OCI-LY7 (cell line): ENCODE measurements at regions of chr9 and their contacts with region 1.

Region 1: DNA sequence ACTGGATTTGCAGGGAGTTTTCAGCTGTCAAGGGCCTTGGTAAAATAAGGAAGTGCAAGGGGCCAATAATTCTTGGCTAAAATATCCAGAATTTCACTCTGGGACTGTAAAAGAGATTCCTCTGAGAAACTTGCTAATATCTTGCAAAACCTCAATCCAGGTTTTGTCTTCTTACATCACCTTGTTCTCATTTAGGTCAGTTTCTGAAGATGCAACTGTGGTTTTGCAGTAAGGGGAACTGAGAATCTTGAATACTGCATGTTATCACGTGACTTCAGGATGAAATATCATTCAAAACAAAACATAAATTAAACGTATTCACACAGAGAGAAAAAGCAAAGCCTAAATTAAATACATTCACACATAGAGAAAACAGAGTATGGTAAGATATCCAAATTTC is 35.0 kb upstream of the RIC1 start:
- DNase-seq: peak; percentile 89
- H3K4me3 ChIP-seq: peak overlapping the region; percentile 22
- H3K27ac ChIP-seq: peak overlapping the region; percentile 70
- H3K4me1 ChIP-seq: peaks cover 70% of the 10 kb centered on the region
- CTCF ChIP-seq: no peak

Region 2: DNA sequence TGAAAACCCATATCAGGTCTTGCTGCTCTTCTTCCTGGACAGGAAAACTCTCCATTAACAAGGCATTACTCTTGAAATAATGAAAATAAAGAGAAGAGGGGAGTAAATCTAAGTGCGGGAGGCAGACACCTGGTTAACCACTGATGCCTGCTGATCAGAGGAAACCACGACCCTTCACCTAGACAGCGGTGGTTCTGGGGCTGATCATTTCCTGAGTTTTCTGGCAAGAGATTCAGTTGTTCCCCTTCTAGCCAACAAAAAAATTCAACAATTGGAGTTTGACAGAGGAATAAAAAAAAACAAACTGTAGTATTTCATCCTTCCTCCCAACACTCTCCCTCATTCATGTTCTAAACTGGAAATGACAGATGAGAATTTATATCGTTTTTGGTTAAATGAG is 292.4 kb before region 1 on chr9:
- CTCF ChIA-PET with region 1: no interaction called
- POLR2A ChIA-PET with region 1: no interaction called
- intact Hi-C with region 1: loop called (anchors 10 kb)
- DNase-seq: no peak
- H3K4me3 ChIP-seq: no peak overlapping the region
- H3K27ac ChIP-seq: no peak overlapping the region
- H3K4me1 ChIP-seq: peaks cover 13% of the 10 kb centered on the region
- CTCF ChIP-seq: no peak

Region 3: DNA sequence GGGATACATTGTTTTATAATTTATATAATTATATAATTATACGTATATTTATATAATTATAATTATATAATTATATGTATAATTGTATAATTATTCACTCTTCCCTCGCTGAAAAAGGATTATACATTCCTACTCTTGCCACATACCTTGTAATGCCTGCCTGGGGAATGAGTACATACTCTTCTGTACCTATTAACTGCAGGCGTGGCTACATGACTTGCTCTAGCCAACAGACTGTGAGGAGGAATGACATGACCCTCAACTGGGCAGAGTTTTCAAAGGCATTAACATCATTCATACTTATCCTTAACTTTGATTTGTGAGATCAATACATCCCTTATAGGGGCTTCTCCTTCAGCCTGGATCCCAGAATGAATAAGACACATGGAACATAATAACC is 219.9 kb after region 1 on chr9:
- CTCF ChIA-PET with region 1: no interaction called
- POLR2A ChIA-PET with region 1: no interaction called
- intact Hi-C with region 1: no loop called
- DNase-seq: no peak
- H3K4me3 ChIP-seq: no peak overlapping the region
- H3K27ac ChIP-seq: no peak overlapping the region
- H3K4me1 ChIP-seq: no peaks in the 10 kb centered on the region
- CTCF ChIP-seq: no peak

Region 4: DNA sequence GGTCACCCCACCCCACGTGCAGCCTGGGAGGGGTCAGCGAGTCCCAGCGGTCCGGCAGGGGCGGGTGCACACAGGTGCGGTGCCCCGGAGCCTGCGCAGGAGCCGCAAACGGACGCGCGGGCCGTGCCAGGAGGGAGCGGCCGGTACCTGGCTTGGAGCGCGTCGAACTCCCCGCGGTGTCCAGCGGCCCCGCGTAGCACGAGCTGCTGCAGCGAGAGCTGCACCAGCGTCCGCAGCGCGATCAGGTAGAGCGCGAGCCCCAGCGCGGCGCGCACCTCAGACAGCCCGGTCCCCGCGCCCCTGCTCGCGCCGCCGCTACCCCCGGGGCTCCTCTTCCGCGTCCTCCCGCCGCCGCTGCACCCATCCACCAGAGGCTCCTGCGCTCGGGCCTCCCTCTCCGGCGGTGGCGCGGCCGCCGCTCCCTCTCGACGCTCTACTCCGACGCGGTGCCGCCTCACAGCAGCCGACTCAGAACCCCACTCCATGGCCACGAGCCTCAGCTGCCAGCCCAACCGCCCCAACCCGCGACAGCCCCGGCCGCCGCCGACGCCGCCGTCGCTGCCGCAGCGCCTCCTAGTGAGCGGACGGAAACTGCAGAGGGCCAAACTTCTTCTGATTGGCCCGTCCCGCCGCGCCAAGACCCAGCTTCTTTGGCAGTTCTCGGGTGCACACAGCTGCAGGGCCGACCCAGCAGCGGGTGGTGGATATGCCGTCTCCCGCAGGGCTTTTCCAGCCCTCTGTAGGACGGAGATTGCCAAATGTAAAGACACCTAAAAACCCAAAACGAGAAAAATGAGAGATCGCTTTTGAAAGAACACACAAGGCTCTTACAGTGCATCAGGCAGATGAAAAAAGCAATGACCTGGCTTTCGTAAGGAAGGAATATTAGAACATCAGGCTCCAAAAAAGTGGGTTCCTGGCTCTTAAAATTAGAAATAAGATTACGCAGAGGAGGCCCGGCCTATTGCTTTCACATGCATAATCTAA is 238.9 kb after region 1 on chr9 and contains the start of gene ERMP1:
- CTCF ChIA-PET with region 1: no interaction called
- POLR2A ChIA-PET with region 1: no interaction called
- intact Hi-C with region 1: loop called (anchors 10 kb)
- DNase-seq: peak; percentile 88
- H3K4me3 ChIP-seq: peak within 1 kb of the TSS; percentile 89
- H3K27ac ChIP-seq: peak within 1 kb of the TSS; percentile 70
- H3K4me1 ChIP-seq: peaks cover 43% of the 10 kb centered on the region
- CTCF ChIP-seq: peak; percentile 88
- total RNA-seq, gene ERMP1: 7.9 and 11.1 TPM in 2 replicates